ENCODE measurements at regions of chr6 and their contacts with region 1.

Region 1: DNA sequence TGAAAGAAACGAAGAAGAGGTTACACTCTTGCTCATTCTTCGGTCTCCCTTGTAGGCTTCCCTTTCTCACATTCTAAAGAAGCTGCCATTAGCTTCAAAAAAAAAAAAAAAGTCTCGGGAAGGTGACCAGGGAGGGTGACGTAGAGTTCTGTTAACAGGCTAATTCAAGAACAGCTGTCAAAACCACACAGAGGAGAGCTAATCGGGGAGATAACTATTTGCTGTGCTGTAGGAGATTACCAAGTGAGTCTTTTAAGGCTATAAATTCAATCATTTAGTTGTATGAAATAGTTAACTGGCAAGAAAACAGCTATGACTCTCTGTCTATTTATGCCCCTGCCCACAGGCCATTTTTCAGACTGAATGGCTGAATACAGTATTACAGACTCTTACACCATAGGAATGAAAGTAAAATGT is 256.8 kb downstream of the SYNE1 start:
- DNase-seq: no peak
- H3K4me3 ChIP-seq: no peak overlapping the region
- H3K27ac ChIP-seq: no peak overlapping the region
- H3K4me1 ChIP-seq: no peaks in the 10 kb centered on the region; the same call in 1 of the 2 replicates
- H3K27me3 ChIP-seq: no peaks in the 10 kb centered on the region
- CTCF ChIP-seq: no peak

Region 2: GRCh38 chr6:152575621-152576150 is 195.3 kb after region 1 on chr6:
- CTCF ChIA-PET with region 1: no interaction called
- POLR2A ChIA-PET with region 1: interaction called, 12 read pairs
- intact Hi-C with region 1: no loop called
- DNase-seq: no peak
- H3K4me3 ChIP-seq: no peak overlapping the region
- H3K27ac ChIP-seq: no peak overlapping the region
- H3K4me1 ChIP-seq: peaks cover 12% of the 10 kb centered on the region; the same call in 1 of the 2 replicates
- H3K27me3 ChIP-seq: no peaks in the 10 kb centered on the region
- CTCF ChIP-seq: no peak